HEK293 (cell line): ENCODE measurements at regions of chr2 and their contacts with region 1.

Region 1: DNA sequence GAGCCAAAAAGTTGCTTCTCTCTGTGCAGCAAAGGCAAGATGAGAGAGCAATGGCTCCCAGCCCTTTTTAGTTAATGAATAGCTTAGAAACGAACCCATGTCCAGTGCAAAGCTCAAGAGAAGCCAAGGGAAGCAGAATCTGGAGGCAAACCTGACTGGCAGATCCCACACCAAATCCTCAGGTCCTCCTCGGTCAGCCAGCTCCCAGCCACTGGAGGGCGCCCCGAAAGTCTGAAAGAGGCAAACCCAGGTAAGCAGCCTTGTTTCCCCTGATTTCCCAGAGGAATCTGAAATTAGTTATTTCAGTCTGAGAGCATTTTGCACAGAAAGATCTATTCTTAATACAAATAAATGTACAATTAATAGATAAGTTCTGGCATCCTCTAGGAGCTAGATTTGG is 71.3 kb upstream of the PID1 start:
- H3K4me3 ChIP-seq: no peak overlapping the region
- H3K27ac ChIP-seq: no peak overlapping the region
- H3K4me1 ChIP-seq: no peaks in the 10 kb centered on the region
- CTCF ChIP-seq: no peak

Region 2: DNA sequence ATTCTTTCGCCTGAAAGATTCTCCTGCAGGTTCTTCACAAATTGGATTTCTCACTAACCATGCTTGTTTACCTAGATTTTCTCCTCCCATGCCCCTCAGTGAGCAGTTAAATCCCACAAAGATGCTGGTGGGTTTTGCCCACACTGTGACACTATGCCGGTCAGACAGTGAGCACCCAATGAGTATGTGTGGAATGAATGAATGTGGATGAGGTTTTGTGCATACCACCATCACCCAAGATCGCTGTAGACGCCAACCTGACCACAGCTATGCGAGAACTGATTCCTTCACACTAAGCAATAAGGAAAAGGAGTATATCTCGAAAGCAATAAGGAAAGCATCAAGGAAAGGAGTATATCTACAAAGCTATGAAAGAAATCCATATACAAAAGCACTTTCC is 188.0 kb before region 1 on chr2:
- CTCF ChIA-PET with region 1: no interaction called
- POLR2A ChIA-PET with region 1: no interaction called
- H3K4me3 ChIP-seq: no peak overlapping the region
- H3K27ac ChIP-seq: no peak overlapping the region
- H3K4me1 ChIP-seq: no peaks in the 10 kb centered on the region
- CTCF ChIP-seq: no peak

Region 3: GRCh38 chr2:229297247-229297646 is 45.1 kb before region 1 on chr2:
- CTCF ChIA-PET with region 1: no interaction called
- POLR2A ChIA-PET with region 1: no interaction called
- H3K4me3 ChIP-seq: no peak overlapping the region
- H3K27ac ChIP-seq: no peak overlapping the region
- H3K4me1 ChIP-seq: no peaks in the 10 kb centered on the region
- CTCF ChIP-seq: no peak

Region 4: DNA sequence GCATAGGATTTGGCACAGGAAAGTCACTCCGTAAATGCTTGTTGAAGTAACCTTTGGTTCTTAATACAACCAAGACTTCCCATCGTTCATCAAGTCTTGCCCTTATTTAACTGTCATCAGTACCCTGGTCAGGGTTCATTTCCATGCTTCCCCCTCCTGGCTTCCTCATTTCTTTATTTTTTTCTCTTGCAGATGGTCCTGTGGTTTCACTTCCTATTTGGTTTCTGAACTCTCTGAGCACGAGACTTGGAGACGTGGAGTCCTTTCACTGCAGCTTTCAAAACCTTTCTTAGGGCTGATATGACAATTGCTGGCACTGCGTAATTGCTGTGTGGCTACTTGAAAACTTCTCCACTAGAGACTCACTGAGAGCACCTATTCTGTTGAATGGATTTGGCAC is 11.4 kb before region 1 on chr2:
- CTCF ChIA-PET with region 1: interaction called, 17 read pairs
- POLR2A ChIA-PET with region 1: no interaction called
- H3K4me3 ChIP-seq: no peak overlapping the region
- H3K27ac ChIP-seq: no peak overlapping the region
- H3K4me1 ChIP-seq: peaks cover 4% of the 10 kb centered on the region
- CTCF ChIP-seq: no peak

Region 5: DNA sequence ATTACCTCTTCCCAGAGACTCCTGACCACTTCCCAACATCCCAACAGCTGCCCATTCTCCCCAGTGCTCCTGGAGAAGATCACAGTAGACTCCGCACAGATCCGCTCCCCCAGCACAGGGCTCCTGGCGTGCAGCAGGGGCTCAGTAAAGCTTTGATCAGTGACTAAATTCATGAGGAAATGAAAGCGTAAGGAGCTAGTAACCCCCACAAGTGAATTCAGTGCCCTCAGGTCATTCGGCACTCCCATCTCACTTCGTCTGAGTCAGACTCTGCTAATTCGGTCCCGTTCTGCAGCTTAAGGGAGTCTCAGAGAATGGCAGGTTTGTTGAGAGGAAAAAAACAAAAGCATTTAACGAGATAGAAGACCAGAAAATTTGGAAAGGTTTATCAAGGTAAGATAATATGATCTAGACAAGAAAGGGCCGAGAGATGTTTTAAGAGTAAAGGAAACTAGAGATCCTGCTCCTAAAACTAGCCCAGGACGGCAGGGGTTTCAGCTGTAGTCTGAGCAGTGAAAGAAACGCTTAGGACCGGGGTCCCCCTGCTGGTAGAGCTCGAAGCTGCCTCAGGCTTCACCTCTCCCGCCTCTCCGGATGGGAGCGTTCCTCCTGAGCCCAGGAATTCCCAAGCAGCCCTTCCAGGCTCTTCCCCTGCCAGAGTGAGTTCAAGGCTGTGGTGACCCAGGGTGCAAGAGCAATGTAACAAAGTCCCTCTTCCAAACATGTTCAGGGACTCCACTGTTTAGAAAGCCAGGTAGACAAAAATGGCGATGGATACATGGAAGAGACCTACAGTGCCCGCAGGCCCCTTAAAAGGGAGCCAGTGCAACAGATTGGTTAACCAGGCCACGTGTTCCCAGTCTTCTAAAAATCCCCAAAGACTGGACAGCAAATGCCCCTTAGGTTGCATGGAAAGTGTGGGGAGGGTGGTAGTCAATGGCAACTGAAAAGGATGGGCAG is 244.7 kb after region 1 on chr2:
- CTCF ChIA-PET with region 1: interaction called, 28 read pairs
- POLR2A ChIA-PET with region 1: no interaction called
- H3K4me3 ChIP-seq: no peak overlapping the region
- H3K27ac ChIP-seq: no peak overlapping the region
- H3K4me1 ChIP-seq: no peaks in the 10 kb centered on the region
- CTCF ChIP-seq: no peak; the same call in 1 of the 2 replicates

Region 6: DNA sequence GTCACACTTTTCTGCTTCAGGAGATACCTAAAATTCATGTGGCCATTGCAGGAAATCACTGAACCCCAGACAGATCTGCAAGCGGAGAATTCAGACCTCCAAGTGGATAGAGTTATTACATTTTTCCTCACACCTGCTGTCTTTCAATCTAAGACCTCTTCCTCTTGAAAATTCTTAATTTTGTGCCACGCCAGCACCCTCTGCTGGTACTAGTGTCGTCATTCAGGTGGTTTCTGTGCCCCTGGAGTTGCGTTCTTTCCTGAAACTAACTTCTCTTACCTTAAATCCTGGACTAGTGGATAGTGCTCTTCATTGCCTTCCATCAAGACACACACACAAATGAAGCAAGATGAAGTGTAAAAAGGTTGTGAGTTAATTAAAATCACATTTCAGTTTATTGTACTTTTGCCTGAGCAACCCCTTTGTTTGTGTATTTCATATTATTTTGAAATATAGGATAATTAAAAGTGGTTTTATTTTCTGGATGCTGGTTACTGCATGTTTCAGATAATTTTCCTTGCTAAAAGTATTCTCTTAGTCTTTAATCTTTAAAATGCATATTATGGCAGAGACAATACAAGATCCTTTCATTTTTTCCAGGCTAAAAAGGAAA is 373.6 kb after region 1 on chr2:
- CTCF ChIA-PET with region 1: interaction called, 14 read pairs
- POLR2A ChIA-PET with region 1: no interaction called
- H3K4me3 ChIP-seq: no peak overlapping the region
- H3K27ac ChIP-seq: no peak overlapping the region
- H3K4me1 ChIP-seq: peaks cover 3% of the 10 kb centered on the region; the same call in 1 of the 2 replicates
- CTCF ChIP-seq: peak; percentile 36